Activated T-helper 1 cell treated with anti-CD3 and anti-CD28 coated beads, Interleukin-12 subunit alpha, Interleukin-12 subunit beta, Interleukin-2, Interleukin-4 antibody, amounts not matched to agents 30 ng/mL and 10 ng/mL and 1 ng/mL, durations not matched to agents 14 hours and 24 hours and 36 hours (primary cell): ENCODE measurements at regions of chr1 and their contacts with region 1.

Region 1: DNA sequence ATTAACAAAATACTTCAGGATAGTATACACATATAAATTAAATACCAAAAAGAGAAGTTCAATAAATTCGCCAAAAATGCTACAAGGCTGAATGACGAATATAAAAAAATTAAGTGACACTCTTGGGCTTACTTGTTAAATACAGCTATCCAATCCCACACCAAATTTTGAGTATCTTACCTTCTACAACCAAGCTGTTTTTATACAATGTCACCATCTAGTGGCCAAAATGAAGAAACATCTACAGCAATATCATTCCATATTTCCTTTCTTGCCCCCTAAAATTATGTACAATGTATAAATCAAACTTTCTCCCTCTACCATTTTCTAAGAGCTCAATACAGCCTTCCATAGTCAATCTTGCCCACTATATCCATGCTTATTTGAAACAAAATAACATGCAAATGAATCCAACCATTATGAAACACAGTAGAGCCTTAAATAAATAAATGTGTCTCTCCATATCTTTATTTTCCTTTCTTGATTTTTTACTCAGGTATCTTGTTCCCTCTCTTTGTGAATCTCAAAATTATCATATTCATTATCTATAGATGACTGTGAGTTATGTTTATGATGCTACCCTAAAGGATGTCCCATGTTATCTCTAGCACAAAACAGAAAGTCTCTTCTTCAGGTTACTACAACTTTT is 86.3 kb downstream of the ACBD6 start:
- DNase-seq: no peak
- H3K4me3 Mint-ChIP-seq: no peak overlapping the region
- H3K27ac Mint-ChIP-seq: no peak overlapping the region
- H3K4me1 Mint-ChIP-seq: no peaks in the 10 kb centered on the region
- H3K27me3 Mint-ChIP-seq: no peaks in the 10 kb centered on the region

Region 2: GRCh38 chr1:180252638-180253536 is 163.2 kb before region 1 on chr1:
- intact Hi-C with region 1: loop called (anchors 1 kb)
- DNase-seq: peak; percentile 48
- H3K4me3 Mint-ChIP-seq: no peak overlapping the region
- H3K27ac Mint-ChIP-seq: no peak overlapping the region
- H3K4me1 Mint-ChIP-seq: peaks cover 11% of the 10 kb centered on the region
- H3K27me3 Mint-ChIP-seq: peaks cover 7% of the 10 kb centered on the region

Region 3: DNA sequence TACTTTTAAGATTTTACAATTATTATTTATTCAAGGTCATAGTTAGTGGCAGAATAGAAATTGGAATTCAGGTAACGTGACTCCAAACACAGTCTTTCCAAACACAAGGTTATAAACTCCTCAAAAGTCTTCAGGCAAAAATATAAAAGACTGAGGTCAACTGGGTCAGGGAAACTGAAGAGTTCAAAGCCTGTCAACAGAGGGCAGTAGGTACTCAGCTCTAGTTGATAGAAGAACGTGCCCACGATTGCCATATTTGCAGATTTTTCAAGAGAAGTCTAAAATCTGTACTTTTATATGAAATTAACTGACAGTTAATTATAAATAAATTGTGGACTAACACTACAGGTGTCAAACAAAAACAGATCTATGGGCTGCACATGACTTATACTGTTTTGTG is 51.1 kb before region 1 on chr1:
- intact Hi-C with region 1: loop called (anchors 1 kb)
- DNase-seq: no peak
- H3K4me3 Mint-ChIP-seq: no peak overlapping the region
- H3K27ac Mint-ChIP-seq: no peak overlapping the region
- H3K4me1 Mint-ChIP-seq: no peaks in the 10 kb centered on the region
- H3K27me3 Mint-ChIP-seq: no peaks in the 10 kb centered on the region

Region 4: DNA sequence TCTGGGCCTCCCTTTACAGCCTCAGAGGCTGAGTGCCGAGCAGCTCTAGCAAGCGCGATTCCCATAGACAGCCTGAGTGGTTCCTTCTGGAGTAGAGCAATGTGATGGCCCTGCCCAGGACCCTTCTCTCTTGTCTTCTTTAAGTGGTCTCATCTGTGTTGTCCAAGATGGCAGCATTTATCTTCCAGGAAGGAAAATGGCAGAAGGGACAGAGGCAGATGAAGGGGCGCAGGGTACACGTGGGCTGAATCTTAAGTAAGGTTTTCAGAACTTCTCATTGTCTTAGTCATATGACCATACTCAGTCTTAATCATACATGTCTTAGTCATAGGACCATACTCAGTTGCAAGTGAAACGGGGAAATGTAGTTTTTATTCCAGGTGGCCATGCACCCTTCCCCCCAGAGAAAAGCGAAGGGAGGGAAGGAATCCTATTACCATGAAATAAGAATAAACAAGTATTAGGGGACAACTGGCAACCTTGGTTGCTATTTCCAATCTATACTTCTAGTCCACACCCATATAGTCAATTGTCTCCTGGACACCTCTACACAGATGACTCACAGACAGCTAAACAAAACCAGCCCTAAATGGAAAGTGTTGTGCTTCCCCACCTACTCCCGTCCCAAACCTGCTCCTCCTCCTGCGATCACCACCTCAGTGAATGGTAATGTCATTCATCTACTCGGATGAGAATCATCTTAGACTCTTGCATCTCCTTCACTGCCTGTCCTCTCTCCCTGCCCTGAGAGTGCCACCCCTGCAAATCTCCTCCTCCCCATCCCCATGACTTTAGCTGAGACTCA is 155.9 kb after region 1 on chr1:
- intact Hi-C with region 1: no loop called
- DNase-seq: no peak
- H3K4me3 Mint-ChIP-seq: peak overlapping the region; percentile 1
- H3K27ac Mint-ChIP-seq: peak overlapping the region; percentile 85
- H3K4me1 Mint-ChIP-seq: peaks cover 23% of the 10 kb centered on the region
- H3K27me3 Mint-ChIP-seq: peaks cover 10% of the 10 kb centered on the region